Calu3 (cell line): ENCODE measurements at regions of chr17 and their contacts with region 1.

Region 1: DNA sequence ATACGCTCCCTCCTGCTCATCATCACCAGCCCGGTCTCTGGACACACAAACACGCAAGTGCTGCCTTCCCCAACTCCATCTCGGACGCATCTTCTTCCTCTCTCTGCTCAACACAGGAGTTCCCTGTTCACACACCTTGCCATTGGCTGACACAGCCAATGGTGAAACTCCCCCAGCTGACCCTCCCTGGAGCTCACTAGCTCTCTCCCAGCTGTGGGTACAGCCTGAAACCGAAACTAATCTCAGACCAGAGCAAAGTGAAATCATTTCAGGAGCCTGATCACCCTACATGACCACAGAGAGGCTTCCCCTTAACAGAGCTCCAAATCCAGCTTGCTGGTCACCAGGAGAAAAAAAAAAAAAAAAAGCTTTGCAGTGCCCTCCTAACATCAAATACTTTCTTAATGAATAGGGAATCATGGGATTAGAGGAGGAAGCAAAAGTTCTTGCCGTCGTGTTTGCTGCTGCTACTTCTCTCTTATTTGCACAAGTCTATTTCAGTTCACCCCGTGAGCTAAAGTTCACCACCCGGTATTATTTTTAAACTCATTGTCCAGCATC is 8.3 kb downstream of the CUEDC1 start:
- DNase-seq: peak; percentile 57
- H3K4me3 Mint-ChIP-seq: peak overlapping the region; percentile 76
- H3K27ac Mint-ChIP-seq: peak overlapping the region; percentile 88
- H3K4me1 Mint-ChIP-seq: peaks cover 51% of the 10 kb centered on the region
- H3K27me3 Mint-ChIP-seq: no peaks in the 10 kb centered on the region
- CTCF ChIP-seq: no peak

Region 2: DNA sequence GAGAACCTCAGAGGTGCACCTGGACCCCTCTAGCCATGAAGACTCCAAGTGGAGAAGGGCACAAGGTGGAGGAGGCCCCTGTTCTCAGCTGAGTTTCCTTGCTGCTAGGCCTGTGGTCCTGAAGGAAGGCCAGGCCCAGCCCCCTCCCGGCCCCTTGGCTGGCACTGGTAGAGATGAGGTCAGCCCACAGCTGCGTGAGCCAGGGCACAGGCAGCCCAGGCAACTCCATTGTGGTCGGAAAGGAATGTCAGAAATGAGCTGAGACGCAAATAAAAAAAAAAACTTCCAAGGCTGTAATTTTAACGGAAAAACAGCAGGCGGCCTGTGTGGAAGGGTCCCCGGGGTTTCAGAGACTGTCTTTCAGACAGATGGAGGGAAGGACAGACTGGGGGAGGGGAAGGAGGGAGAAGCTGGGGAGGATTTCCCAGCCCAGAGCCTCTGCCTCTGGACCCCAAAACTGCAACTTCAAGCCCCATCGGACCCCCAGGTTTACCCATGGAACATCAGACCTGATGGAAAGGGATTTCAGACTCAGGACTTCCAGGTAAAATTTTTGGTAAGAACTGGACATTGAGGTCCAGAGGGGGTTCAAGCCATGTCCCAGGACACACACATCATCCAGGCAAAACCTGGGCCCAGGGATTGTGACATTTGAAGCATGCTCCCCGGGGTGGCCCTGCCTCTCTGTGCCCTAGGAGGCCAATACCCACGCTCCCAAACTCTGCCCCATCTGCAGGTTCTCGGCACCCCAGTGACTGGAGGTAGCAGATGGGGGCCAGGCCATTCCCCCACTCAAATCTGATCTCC is 71.4 kb before region 1 on chr17:
- CTCF ChIA-PET with region 1: interaction called, 3 read pairs
- intact Hi-C with region 1: loop called (anchors 5 kb)
- DNase-seq: peak; percentile 84
- H3K4me3 Mint-ChIP-seq: no peak overlapping the region
- H3K27ac Mint-ChIP-seq: no peak overlapping the region
- H3K4me1 Mint-ChIP-seq: peaks cover 28% of the 10 kb centered on the region
- H3K27me3 Mint-ChIP-seq: no peaks in the 10 kb centered on the region
- CTCF ChIP-seq: peak; percentile 54

Region 3: DNA sequence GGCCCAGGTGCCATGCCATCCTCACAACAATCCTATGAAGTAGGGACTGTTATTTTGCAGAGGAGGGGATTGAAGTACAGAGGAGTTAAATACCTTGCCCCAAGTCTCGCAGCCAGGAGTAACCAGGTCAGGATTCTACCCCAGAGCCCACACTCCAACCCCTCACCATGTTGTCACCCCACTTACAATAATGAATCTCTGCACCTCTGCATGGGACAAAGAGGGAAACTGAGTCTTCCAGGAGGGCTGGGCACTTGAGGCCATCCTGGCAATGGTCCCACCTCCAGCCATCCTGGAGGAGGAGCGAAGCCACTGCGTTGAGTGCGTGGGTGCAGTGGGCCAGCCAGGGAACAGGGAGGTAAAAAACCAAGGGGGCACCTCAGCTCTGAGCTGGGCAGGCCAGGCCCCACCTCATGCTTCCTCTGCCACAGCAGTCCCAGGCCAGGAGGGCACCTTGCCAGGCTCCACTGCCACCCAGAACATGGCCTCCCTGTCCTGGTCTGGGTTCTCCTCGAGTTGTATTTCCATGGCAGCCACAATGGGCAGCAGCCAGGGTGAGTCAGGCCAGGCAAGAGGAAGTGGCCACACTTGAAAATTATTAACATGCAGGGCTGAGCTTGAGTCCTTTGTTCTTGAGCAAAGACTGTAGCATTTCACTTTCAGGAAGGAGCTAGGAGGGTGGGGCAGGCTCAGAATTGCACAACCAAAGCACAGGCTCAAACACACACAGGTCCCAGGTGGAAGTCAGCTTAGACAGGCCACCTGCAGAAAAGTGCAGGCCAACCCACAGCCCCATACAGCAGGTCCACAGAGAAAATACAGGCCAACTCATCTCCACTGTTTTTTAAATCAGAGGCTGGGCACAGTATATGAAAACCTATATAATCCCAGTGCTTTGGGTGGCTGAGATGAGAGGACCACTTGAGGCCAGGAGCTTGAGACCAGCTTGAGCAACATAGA is 43.8 kb before region 1 on chr17:
- CTCF ChIA-PET with region 1: interaction called, 7 read pairs
- intact Hi-C with region 1: loop called (anchors 2 kb)
- DNase-seq: peak; percentile 84
- H3K4me3 Mint-ChIP-seq: peak overlapping the region; percentile 13
- H3K27ac Mint-ChIP-seq: peak overlapping the region; percentile 93
- H3K4me1 Mint-ChIP-seq: peaks cover 62% of the 10 kb centered on the region
- H3K27me3 Mint-ChIP-seq: no peaks in the 10 kb centered on the region
- CTCF ChIP-seq: no peak

Region 4: DNA sequence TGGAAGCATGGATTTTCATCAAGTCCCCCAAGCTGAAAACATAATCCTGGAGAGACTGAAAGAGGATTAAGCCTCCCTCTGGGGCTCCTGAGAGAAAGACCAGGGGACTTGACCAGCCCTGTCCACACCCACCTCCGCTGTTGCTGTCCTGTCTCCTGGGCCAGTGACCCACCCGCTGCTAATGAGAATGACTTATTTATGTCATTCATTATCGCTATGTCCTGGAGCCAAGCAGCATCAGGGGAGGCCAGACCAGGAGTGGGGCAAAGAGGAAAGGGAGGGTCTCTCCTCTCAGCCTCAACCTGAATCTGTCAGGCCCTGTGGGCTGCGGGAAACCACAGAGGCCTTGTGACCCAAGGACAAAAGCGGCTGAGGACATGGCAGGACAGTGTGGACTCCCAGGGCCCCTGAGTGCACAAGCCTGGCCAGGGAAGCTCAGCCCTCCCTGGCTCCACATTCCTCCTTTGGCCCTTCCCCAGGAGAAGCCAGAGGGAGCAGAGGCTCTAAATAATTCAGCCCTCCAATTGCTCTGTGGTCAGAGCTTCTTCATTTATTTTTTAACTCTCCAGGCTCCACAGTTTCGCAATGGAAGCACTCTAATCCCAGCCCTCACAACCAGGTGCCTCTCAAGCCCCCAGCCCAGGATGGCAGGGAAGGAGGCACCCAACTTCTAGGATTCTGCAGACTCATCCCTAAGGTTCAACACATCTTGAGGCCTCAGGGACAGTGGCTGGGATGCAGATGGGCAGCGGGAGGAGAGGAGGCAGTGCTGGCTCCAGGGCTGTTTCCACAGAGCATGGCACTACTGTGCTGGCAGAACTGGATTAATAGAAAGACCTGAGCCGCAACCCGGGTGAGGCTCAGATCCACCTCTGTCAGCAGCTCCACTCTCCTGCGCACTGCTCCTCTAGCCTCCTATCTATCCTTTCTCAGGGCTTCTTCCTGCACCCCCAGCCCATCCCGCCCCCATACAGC is 10.8 kb before region 1 on chr17:
- CTCF ChIA-PET with region 1: interaction called, 12 read pairs
- intact Hi-C with region 1: no loop called
- DNase-seq: peak; percentile 55
- H3K4me3 Mint-ChIP-seq: peak overlapping the region; percentile 44
- H3K27ac Mint-ChIP-seq: peak overlapping the region; percentile 83
- H3K4me1 Mint-ChIP-seq: peaks cover 34% of the 10 kb centered on the region
- H3K27me3 Mint-ChIP-seq: no peaks in the 10 kb centered on the region
- CTCF ChIP-seq: no peak

Region 5: DNA sequence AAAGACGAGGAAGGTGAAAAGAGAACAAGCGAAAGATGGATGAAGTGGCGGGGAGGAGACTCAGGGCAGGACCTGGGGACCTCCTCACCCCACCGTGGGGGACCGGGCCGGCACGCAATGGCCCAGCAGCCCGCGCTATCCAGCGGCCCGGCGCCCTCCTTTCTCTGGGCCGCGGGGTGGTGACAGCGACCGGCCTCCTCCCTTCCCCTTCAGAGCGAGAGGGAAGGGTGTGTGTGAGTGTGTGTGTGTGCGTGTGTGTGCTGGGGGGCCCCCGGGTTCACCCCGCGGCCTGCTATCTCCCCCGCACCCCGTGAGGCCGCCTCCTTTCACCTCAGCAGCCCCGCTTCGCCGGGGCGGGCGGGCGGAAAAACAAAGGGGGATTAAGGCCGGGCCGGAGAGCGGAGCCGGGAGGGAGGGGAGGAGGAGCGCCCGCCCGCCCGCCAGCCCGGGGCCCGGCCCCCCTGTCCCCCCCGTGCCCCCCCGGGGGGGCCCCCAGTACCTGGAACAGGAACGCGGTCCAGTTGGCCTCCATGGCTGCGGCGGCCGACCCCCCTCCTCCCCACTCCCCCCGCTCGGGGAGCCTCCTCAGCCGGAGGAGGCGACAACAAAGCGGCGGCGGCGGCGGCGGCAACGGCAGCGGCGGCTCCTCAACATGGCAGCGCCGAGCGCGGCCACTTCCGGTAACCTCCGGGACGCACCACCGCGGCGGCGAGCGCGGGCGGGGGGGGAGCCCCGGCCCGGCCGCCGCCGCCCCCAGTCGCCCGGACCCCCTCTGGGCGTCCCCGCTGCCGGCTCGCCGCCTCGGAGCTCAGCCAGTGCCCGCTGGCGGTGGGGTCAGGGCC is 40.9 kb after region 1 on chr17 and contains the start of gene VEZF1:
- CTCF ChIA-PET with region 1: interaction called, 3 read pairs
- intact Hi-C with region 1: loop called (anchors 2 kb)
- DNase-seq: peak; percentile 66
- H3K4me3 Mint-ChIP-seq: peak within 1 kb of the TSS; percentile 79
- H3K27ac Mint-ChIP-seq: peak within 1 kb of the TSS; percentile 93
- H3K4me1 Mint-ChIP-seq: peaks cover 15% of the 10 kb centered on the region
- H3K27me3 Mint-ChIP-seq: no peaks in the 10 kb centered on the region
- CTCF ChIP-seq: no peak
- total RNA-seq, gene VEZF1: 33.4 and 40.4 TPM in 2 replicates

Region 6: GRCh38 chr17:58587702-58588254 is 640.9 kb after region 1 on chr17:
- CTCF ChIA-PET with region 1: no interaction called
- intact Hi-C with region 1: no loop called
- DNase-seq: peak; percentile 44
- H3K4me3 Mint-ChIP-seq: no peak overlapping the region
- H3K27ac Mint-ChIP-seq: no peak overlapping the region
- H3K4me1 Mint-ChIP-seq: no peaks in the 10 kb centered on the region
- H3K27me3 Mint-ChIP-seq: no peaks in the 10 kb centered on the region
- CTCF ChIP-seq: peak; percentile 78